ENCODE measurements at regions of chr5 and their contacts with region 1.

Region 1: DNA sequence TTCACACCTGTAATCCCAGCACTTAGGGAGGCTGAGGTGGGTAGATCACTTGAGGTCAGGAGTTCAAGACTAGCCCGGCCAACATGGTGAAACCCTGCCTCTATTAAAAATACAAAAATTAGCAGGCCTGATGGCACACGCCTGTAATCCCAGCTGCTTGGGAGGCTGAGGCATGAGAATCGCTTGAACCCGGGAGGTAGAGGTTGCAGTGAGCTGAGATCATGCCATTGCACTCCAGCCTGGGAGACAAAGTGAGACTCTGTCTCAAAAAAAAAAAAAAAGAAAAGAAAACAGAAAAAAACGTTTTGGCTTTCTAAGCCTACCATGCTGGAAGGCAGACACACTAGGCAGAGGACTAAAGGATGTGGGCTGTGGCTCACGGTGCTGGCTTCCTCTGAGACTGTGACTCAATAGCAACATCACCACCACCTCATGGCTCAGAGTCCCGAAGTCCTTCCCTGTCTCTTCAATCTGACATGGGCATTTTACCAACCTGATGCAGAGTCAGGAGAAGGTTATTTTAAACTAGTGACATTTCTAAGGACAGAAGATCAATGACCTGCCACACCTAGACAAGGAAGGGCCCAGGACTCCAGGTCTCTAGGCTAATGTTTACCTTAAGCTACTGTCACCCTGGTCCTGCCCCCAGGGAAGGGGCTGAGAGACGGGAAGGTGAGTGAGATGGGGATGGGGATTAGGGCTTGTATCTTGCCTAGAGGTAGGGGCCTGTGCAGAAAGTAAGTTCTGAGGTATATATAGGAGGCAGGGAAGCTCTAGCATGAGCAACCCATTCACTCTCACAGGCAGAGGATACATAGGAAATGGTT is 3.8 kb downstream of the ECSCR start:
- DNase-seq: peak; percentile 82
- H3K4me3 ChIP-seq: peak overlapping the region in 1 of 3 experiments; percentile 97
- H3K27ac ChIP-seq: peak overlapping the region; percentile 99
- H3K4me1 ChIP-seq: peaks cover 41% of the 10 kb centered on the region
- H3K27me3 ChIP-seq: no peaks in the 10 kb centered on the region
- CTCF ChIP-seq: no peak
- POLR2A ChIP-seq: no peak

Region 2: DNA sequence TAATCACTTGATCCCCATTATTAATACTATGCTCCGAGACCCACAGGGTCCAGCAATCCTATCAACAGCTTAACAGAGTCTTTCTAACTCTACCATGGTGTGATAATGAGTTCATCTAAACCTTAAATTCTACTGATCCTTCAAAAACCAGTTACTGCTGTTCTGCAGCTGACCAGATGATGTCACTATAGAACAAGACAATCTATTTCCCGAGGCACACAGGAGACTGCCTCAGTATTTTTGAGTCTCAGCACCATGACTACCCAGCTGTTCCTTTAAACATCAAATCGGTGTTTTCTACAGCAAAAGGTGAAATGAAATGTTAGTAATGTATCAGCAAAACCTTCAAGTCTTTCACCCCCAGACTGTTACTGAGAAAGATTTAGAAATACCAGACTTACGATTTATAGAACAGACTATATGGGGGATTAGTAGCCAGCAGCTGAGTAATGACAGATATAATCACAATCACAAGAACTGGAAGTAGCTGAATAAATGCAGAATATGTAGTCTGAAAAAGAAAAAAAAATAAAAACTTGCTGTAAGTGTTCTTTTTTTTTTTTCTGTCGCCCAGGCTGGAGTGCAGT is 36.4 kb before region 1 on chr5:
- CTCF ChIA-PET with region 1: interaction called, 10 read pairs
- POLR2A ChIA-PET with region 1: interaction called, 6 read pairs
- dilution Hi-C with region 1: no loop called
- intact Hi-C with region 1: loop called (anchors 1 kb)
- DNase-seq: peak; percentile 79
- H3K4me3 ChIP-seq: no peak overlapping the region
- H3K27ac ChIP-seq: no peak overlapping the region
- H3K4me1 ChIP-seq: peaks cover 25% of the 10 kb centered on the region
- H3K27me3 ChIP-seq: no peaks in the 10 kb centered on the region
- CTCF ChIP-seq: peak; percentile 63 to 81
- POLR2A ChIP-seq: no peak

Region 3: DNA sequence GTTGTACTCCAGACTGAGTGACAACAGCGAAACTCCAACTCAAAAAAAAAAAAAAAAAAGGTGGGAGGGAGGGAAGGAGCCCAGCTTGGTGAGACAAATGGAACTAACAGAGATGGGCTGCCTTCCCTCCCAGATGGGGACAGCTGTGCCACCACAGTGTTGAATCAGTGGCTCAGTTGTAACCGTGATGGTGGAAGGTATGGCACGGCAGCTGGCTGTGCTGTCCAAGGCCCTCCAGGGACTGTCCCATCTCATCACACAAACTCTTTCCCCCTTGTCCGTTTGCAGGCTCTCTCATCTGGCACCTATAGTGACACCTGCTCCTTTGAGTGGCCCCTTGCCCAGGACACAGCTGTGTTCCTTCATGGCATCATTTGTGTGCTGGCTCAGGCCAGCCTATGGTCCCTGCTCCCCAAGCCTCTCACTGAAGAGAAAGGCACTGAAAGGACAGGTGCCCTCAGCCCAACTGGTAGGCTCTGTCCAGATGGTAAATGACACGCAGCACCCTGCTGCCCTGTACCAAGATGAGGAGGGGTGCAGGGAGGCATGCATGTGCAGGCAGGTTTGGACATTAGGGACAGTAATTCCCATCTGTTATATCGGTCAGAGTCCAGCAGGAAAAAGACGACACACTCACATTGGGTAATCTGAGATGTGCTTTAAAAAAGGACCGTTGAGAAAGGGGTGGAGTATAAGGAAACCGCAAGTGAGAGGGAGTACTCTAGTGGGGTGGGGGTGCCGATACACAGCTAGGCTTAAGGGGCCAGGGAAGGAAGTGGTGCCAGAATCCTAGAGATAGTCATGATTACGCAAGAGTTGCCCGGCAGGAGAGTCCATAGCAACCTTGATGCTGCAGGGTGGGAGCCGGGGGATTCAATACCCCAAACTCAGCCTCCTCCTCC is 16.3 kb after region 1 on chr5:
- CTCF ChIA-PET with region 1: interaction called, 4 read pairs
- POLR2A ChIA-PET with region 1: interaction called, 15 read pairs
- dilution Hi-C with region 1: no loop called
- intact Hi-C with region 1: loop called (anchors 1 kb)
- DNase-seq: no peak
- H3K4me3 ChIP-seq: no peak overlapping the region
- H3K27ac ChIP-seq: no peak overlapping the region
- H3K4me1 ChIP-seq: peaks cover 18% of the 10 kb centered on the region
- H3K27me3 ChIP-seq: no peaks in the 10 kb centered on the region
- CTCF ChIP-seq: no peak
- POLR2A ChIP-seq: no peak

Region 4: GRCh38 chr5:139492700-139493192 is 34.0 kb after region 1 on chr5:
- CTCF ChIA-PET with region 1: interaction called, 4 read pairs
- POLR2A ChIA-PET with region 1: interaction called, 11 read pairs
- dilution Hi-C with region 1: no loop called
- intact Hi-C with region 1: loop called (anchors 1 kb)
- DNase-seq: peak; percentile 31
- H3K4me3 ChIP-seq: no peak overlapping the region
- H3K27ac ChIP-seq: no peak overlapping the region
- H3K4me1 ChIP-seq: peaks cover 33% of the 10 kb centered on the region
- H3K27me3 ChIP-seq: no peaks in the 10 kb centered on the region
- CTCF ChIP-seq: no peak
- POLR2A ChIP-seq: no peak

Region 5: GRCh38 chr5:139560752-139561654 is 102.2 kb after region 1 on chr5 and contains the start of gene UBE2D2:
- CTCF ChIA-PET with region 1: interaction called, 3 read pairs
- POLR2A ChIA-PET with region 1: interaction called, 6 read pairs
- dilution Hi-C with region 1: no loop called
- intact Hi-C with region 1: loop called (anchors 1 kb)
- DNase-seq: peak; percentile 97
- H3K4me3 ChIP-seq: peak within 1 kb of the TSS; percentile 71 to 92 (median 85)
- H3K27ac ChIP-seq: peak within 1 kb of the TSS; percentile 82
- H3K4me1 ChIP-seq: peaks cover 31% of the 10 kb centered on the region
- H3K27me3 ChIP-seq: no peaks in the 10 kb centered on the region
- CTCF ChIP-seq: no peak
- POLR2A ChIP-seq: peak; percentile 89
- total RNA-seq, gene UBE2D2: 156 and 172 TPM in 2 replicates

Measured in endothelial cell of umbilical vein (primary cell).